Activated T-helper 1 cell treated with anti-CD3 and anti-CD28 coated beads, Interleukin-12 subunit alpha, Interleukin-12 subunit beta, Interleukin-2, Interleukin-4 antibody, amounts not matched to agents 30 ng/mL and 10 ng/mL and 1 ng/mL, durations not matched to agents 14 hours and 24 hours and 36 hours (primary cell): ENCODE measurements at regions of chr6 and their contacts with region 1.

Region 1: DNA sequence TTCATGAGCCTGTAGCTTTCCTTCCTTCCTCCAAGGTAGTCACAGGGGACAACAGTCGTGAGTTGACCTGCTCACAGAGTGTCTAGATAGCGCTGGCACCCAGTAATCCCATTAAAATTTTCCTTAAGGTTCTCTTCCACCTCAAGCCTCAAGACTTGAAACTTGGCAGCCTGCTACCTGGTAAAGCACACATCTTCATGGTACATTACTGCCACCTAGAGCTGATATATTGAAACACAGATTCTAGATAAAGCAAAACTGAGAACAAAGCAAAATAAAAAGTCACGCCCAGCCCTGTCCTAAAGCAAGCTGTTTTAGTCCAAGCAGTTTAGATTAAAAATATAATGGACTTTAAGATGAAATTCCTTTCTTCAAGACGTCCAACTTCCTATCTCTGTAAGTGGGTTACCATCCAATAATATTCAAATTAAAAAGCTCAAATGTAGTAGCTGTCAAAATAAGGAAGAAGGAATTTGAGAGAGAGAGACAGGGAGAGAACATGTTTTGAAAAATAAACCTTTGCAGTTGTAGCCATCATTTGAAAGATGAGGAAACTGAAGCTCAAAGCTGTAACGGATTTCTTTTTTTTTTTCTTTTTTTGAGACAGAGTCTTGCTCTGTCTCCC is 50.7 kb upstream of the CD83 start:
- DNase-seq: no peak
- H3K4me3 Mint-ChIP-seq: peak overlapping the region; percentile 32
- H3K27ac Mint-ChIP-seq: peak overlapping the region; percentile 21
- H3K4me1 Mint-ChIP-seq: peaks cover 35% of the 10 kb centered on the region
- H3K27me3 Mint-ChIP-seq: peaks cover 11% of the 10 kb centered on the region

Region 2: DNA sequence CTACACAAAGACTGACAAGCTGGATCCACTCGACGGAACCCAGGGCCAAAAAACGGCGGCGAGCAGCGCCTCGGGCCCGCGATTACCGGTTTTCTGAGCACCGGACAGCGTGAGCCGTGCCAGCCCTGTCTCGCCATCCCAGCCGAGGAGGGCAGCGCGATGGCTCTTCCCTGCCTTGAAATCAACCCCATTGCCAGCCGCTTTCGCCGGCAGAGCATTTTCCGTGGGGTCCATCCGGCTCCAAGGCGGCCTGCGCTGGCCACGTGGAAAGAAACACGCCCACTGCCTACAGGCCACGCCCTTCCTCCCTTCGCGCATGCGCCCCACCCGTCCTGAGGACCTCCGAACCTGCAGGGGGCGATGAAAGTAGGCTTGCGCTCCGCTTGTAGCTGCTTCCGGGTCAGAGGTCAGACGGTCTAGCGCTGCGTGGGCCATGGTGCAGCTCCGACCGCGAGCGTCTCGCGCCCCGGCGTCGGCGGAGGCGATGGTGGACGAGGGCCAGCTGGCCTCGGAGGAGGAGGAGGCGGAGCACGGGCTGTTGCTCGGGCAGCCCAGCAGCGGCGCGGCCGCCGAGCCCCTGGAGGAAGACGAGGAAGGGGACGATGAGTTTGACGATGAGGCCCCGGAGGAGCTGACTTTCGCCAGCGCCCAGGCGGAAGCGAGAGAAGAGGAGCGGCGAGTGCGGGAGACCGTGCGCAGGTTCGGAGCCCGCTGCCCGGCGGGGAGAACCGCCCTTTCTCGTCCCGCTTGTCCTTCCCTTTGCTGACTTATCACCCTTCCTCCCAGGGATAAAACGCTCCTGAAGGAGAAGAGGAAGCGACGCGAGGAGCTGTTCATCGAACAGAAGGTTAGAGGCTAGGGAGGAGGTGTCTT is 451.7 kb before region 1 on chr6 and contains the start of gene NOL7:
- intact Hi-C with region 1: loop called (anchors 10 kb)
- DNase-seq: peak; percentile 98
- H3K4me3 Mint-ChIP-seq: peak within 1 kb of the TSS; percentile 99
- H3K27ac Mint-ChIP-seq: peak within 1 kb of the TSS; percentile 87
- H3K4me1 Mint-ChIP-seq: peaks cover 54% of the 10 kb centered on the region
- H3K27me3 Mint-ChIP-seq: no peaks in the 10 kb centered on the region
- total RNA-seq, gene NOL7: 97.7 and 100 TPM in 2 replicates

Region 3: DNA sequence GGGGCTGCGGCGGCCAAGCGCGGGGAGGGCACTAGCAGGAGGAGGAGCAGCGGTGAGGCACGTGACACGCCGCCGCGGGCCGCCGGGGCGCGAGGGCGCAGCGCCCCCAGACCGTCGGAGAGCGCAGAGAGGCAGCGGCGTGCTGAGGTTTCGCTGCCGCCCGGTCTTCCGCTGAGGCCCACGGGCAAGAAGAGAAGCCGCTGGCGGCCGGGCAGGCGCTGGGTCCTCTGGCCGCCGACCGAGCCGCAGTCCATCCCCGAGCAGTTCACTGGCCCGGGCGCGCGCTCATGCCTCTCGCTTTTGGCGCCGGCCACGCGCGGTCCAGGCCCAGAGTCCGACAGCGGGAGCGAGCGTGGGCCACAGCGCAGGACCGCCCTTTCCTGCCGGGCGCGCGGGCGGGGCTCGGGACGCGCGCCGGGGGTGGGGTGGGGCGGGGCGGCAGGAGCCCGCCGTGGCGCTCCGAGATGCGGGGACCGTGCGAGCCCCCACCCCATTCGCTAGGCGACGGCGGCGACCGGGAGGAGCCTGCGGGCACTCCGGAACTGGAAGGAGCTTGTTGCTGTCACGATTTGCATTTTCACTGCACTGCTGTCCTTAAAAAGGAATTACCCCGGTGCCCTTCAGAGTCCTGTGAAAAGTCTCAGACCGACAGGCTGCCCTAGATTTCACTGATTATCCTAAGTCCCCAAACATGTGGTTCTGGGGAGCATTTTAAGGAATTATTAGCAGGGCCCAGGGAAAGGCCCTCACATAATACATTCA is 252.5 kb before region 1 on chr6 and contains the start of gene MCUR1:
- intact Hi-C with region 1: loop called (anchors 5 kb)
- DNase-seq: peak; percentile 80
- H3K4me3 Mint-ChIP-seq: peak within 1 kb of the TSS; percentile 85
- H3K27ac Mint-ChIP-seq: peak within 1 kb of the TSS; percentile 52
- H3K4me1 Mint-ChIP-seq: peaks cover 38% of the 10 kb centered on the region
- H3K27me3 Mint-ChIP-seq: peaks cover 2% of the 10 kb centered on the region
- total RNA-seq, gene MCUR1: 37.8 and 40.2 TPM in 2 replicates

Region 4: GRCh38 chr6:14046476-14047068 is 20.3 kb before region 1 on chr6:
- intact Hi-C with region 1: loop called (anchors 2 kb)
- DNase-seq: peak; percentile 27
- H3K4me3 Mint-ChIP-seq: no peak overlapping the region
- H3K27ac Mint-ChIP-seq: no peak overlapping the region
- H3K4me1 Mint-ChIP-seq: no peaks in the 10 kb centered on the region
- H3K27me3 Mint-ChIP-seq: peaks cover 29% of the 10 kb centered on the region

Region 5: GRCh38 chr6:14144678-14145113 is 77.8 kb after region 1 on chr6:
- intact Hi-C with region 1: loop called (anchors 2 kb)
- DNase-seq: peak; percentile 48
- H3K4me3 Mint-ChIP-seq: no peak overlapping the region
- H3K27ac Mint-ChIP-seq: no peak overlapping the region
- H3K4me1 Mint-ChIP-seq: peaks cover 12% of the 10 kb centered on the region
- H3K27me3 Mint-ChIP-seq: peaks cover 3% of the 10 kb centered on the region